Cardiac septum (tissue), 1 donor: ENCODE measurements at regions of chr9 and their contacts with region 1.

Region 1: GRCh38 chr9:34611829-34612630 is at the start of gene RPP25L:
- DNase-seq: peak; percentile 94
- total RNA-seq, gene RPP25L: 39.4 TPM

Region 2: GRCh38 chr9:34458013-34458958 is 153.7 kb before region 1 on chr9 and contains the starts of genes DNAI1 and FAM219A:
- intact Hi-C with region 1: loop called (anchors 5 kb)
- DNase-seq: peak; percentile 100
- total RNA-seq, gene DNAI1: 0.30 TPM
- total RNA-seq, gene FAM219A: 39.1 TPM

Region 3: GRCh38 chr9:34633851-34634550 is 22.0 kb after region 1 on chr9:
- intact Hi-C with region 1: loop called (anchors 1 kb)
- DNase-seq: peak; percentile 84

Region 4: DNA sequence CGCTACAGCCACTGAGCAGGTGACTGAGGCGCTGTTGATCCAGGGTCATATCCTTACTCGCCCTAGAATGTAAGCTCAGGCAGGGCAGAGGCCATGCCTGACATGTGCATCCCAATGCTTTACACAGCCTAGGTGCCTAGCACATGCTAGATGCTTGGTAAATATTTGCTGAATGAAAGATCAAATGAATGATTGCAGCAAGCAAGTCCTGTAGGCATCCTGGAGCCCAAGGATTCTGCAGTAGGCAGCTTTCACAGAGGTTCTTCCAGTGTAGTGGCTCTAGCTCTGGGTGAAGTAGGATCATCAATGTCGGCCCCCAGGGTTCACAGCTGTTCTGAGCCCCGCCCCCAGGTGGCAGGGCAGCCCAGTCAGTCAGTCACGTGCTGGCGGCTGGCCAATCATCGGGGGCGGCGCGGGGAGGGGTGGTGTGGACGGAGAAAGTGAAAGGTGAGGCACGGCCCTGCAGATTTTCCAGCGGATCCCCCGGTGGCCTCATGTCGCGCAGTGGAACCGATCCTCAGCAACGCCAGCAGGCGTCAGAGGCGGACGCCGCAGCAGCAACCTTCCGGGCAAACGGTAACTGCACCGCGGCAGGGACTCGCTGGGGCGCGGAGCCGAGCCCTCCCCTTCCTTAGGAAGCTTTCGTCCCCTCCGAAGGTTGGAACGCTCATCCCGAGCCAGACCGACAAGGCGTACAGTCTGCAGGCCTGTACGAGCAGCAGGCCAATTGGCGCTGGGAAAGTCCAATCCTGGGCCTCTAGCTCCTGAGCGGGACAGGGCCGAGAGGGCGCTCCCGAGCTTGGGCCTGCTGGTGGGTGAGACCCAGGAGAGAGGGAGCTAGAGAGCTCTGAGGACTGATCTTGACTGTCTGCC is 34.4 kb after region 1 on chr9 and contains the start of gene GALT:
- intact Hi-C with region 1: loop called (anchors 5 kb)
- DNase-seq: peak; percentile 99
- total RNA-seq, gene GALT: 42.4 TPM